ENCODE measurements at regions of chr1 and their contacts with region 1.

Region 1: GRCh38 chr1:155323798-155324610 is 3.3 kb downstream of the RUSC1 start:
- DNase-seq: peak; percentile 96
- H3K4me3 ChIP-seq: peak overlapping the region; percentile 71 to 90 (median 81)
- H3K27ac ChIP-seq: peak overlapping the region; percentile 98 to 100 (median 100)
- H3K4me1 ChIP-seq: peaks cover 14 to 48% (median 38%) of the 10 kb centered on the region in 4 donors
- H3K27me3 ChIP-seq: no peaks in the 10 kb centered on the region
- CTCF ChIP-seq: no peak
- EP300 ChIP-seq: no peak
- POLR2A ChIP-seq: peak; percentile 94

Region 2: GRCh38 chr1:155127105-155127964 is 196.7 kb before region 1 on chr1 and contains the start of gene EFNA1:
- in situ Hi-C with region 1: no loop called
- intact Hi-C with region 1: no loop called
- DNase-seq: peak; percentile 89
- H3K4me3 ChIP-seq: peak within 1 kb of the TSS; percentile 53 to 71 (median 69)
- H3K27ac ChIP-seq: peak within 1 kb of the TSS; percentile 93 to 100 (median 94)
- H3K4me1 ChIP-seq: peaks cover 14 to 86% (median 66%) of the 10 kb centered on the region in 4 donors
- H3K27me3 ChIP-seq: no peaks in the 10 kb centered on the region
- CTCF ChIP-seq: peak in 1 of 5 experiments; percentile 2
- EP300 ChIP-seq: peak; percentile 35
- POLR2A ChIP-seq: peak; percentile 85
- total RNA-seq, gene EFNA1: 18.5 to 108 (median 62.7) TPM

Region 3: GRCh38 chr1:155195201-155196102 is 128.6 kb before region 1 on chr1:
- in situ Hi-C with region 1: no loop called
- intact Hi-C with region 1: loop called (anchors 5 kb)
- DNase-seq: no peak
- H3K4me3 ChIP-seq: peak overlapping the region; percentile 32 to 58 (median 42)
- H3K27ac ChIP-seq: peak overlapping the region; percentile 92 to 98 (median 95)
- H3K4me1 ChIP-seq: peaks cover 10 to 37% (median 32%) of the 10 kb centered on the region in 4 donors
- H3K27me3 ChIP-seq: no peaks in the 10 kb centered on the region
- CTCF ChIP-seq: no peak
- EP300 ChIP-seq: no peak
- POLR2A ChIP-seq: no peak

Region 4: DNA sequence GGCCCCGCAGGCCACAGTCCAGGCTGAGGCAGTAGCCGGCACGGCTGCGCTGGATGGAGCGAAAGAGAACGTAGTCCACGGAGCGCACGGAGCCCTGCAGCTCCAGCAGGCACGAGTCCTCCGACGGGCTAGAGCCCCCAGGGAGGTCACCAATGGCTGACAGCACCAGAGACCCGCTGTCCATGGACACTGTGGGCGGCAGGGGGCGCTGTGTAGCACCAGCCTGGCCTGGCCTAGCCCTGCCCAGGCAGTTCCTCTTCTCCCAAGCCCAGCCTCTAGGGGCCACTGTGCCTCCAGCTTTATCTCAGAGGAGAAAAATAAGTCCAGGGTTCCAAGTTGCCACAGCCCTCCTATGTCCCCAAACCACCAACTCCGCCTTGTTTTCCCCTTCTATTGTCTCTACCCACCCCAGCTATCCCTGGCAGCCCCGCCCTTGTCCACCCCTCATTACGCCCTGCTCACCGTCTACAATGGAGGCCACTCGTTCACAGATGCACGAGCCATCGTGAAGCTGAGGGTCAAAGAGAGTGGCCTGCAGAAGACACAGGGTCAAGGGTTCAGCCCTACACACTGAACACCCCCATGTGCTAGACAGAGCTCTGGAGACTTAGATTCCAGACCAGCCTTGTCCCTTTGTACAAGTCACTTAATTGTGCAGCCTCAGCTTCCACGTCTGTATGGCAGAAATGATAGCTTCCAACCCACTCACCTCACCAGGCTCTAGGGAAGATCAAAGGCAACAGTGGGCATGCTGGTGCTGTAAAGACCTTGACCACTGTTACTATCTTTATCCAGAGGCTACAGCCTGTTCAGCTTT is 73.2 kb before region 1 on chr1:
- in situ Hi-C with region 1: loop called in 2 of 4 experiments (anchors 10 kb)
- intact Hi-C with region 1: loop called (anchors 2 kb)
- DNase-seq: peak; percentile 95
- H3K4me3 ChIP-seq: peak overlapping the region in 2 of 4 donors; percentile 22 to 37
- H3K27ac ChIP-seq: peak overlapping the region; percentile 34 to 54 (median 52)
- H3K4me1 ChIP-seq: peaks cover 21 to 30% (median 24%) of the 10 kb centered on the region in 4 donors
- H3K27me3 ChIP-seq: no peaks in the 10 kb centered on the region
- CTCF ChIP-seq: peak; percentile 99 to 100 (median 99)
- EP300 ChIP-seq: no peak
- POLR2A ChIP-seq: no peak

Region 5: DNA sequence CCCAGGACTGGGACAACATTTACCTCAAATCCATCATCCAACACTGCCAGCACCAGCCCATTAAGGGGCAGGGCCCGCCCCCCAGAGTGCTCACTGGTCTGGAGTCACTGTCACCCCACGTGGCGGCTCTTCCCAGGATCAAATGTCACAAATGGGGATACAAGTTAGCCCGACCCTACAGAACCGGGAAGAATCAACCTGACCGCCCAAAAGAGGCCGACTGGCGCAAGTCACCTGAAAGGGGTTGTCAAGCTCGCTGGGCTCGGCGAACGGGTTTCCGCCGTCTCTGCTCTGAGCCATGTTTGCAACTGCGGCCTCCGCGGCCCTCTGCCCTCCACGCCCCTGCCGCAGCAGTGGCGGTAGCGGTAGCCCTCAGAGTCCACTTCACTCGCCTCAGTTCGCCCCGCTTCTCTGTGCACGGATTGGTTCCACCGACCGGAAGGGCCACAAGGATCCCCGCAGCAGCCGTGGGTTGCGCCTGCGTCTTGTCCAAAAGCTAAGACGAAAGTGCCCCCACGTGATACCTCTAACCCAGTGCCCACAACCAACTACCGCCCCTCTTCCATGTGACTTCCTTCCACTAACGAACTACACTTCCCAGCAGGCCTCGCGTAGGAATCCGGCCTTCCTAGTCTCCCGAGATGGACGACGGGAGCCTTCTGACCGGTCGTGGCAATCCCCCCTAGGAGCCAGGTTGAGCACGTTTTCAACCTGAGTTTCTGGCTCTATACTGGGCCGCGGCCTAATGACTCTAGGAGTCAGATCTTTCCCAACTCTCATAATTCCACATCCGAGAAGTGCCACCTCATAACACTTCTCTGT is 61.9 kb before region 1 on chr1 and contains the start of gene SCAMP3:
- in situ Hi-C with region 1: loop called in 3 of 4 experiments (anchors 10 kb)
- intact Hi-C with region 1: no loop called
- DNase-seq: peak; percentile 96
- H3K4me3 ChIP-seq: peak within 1 kb of the TSS; percentile 46 to 84 (median 68)
- H3K27ac ChIP-seq: peak within 1 kb of the TSS; percentile 84 to 91 (median 89)
- H3K4me1 ChIP-seq: peaks cover 8 to 17% (median 15%) of the 10 kb centered on the region in 4 donors
- H3K27me3 ChIP-seq: no peaks in the 10 kb centered on the region
- CTCF ChIP-seq: peak in 1 of 5 experiments; percentile 3
- EP300 ChIP-seq: no peak
- POLR2A ChIP-seq: peak; percentile 86
- total RNA-seq, gene SCAMP3: 7.8 to 61.3 (median 35.2) TPM

Region 6: GRCh38 chr1:155277070-155277895 is 46.7 kb before region 1 on chr1 and contains the start of gene HCN3:
- in situ Hi-C with region 1: loop called in 3 of 4 experiments (anchors 5 to 10 kb)
- intact Hi-C with region 1: loop called (anchors 5 kb)
- DNase-seq: peak; percentile 99
- H3K4me3 ChIP-seq: peak within 1 kb of the TSS; percentile 56 to 90 (median 70)
- H3K27ac ChIP-seq: peak within 1 kb of the TSS; percentile 85 to 86 (median 85)
- H3K4me1 ChIP-seq: peaks cover 7 to 28% (median 23%) of the 10 kb centered on the region in 4 donors
- H3K27me3 ChIP-seq: no peaks in the 10 kb centered on the region
- CTCF ChIP-seq: peak; percentile 11 to 79 (median 58)
- EP300 ChIP-seq: no peak
- POLR2A ChIP-seq: no peak
- total RNA-seq, gene HCN3: 13.0 to 34.0 (median 22.2) TPM

Region 7: GRCh38 chr1:155591770-155592169 is 267.8 kb after region 1 on chr1:
- in situ Hi-C with region 1: loop called in 1 of 4 experiments (anchors 25 kb)
- intact Hi-C with region 1: no loop called
- DNase-seq: no peak
- H3K4me3 ChIP-seq: no peak overlapping the region
- H3K27ac ChIP-seq: no peak overlapping the region
- H3K4me1 ChIP-seq: no peaks in the 10 kb centered on the region
- H3K27me3 ChIP-seq: no peaks in the 10 kb centered on the region
- CTCF ChIP-seq: peak; percentile 49 to 56 (median 51)
- EP300 ChIP-seq: no peak
- POLR2A ChIP-seq: no peak